GM12878 (cell line): ENCODE measurements at regions of chr6 and their contacts with region 1.

Region 1: DNA sequence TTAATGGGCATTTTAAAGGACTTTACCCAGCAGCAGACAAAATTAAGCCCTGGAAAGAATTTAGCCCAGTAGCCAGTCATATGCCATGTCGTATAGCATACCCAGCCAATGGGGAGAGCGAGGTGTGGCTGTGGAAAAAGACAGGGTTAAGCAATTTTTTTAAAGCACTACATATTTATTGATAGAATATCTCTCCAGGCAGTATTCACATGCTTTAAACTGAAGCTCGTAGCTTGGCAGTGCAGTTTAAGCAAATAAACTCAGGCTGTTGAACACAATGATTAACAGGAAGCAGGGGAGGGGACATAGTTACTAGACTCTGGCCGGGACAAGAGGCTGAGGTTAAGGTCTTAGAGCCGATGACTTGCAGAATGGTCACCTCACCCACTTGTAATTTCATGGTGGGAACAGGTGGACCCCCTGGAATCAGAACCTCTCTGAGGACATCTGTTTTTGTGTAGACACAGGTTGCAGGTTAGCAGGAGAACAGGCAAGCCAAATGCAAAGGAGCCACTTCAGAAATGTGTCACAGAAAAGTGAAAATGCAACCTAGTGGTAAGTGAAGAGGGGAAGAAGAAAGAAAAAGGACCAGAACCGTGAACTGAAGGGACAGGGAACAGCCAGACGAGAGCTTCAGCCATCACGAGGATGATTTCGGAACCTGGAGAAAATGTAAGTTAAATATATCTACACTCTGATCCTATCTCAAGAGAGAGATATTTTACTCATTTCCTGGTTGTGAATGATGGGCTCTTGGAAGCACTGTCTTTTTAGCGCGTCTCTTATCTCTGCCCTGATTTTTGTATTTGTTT is 7.2 kb downstream of the GCNT2 start:
- DNase-seq: peak; percentile 72
- ATAC-seq: peak; percentile 66
- H3K4me3 ChIP-seq: peak overlapping the region; percentile 82
- H3K27ac ChIP-seq: peak overlapping the region; percentile 73
- H3K4me1 ChIP-seq: peaks cover 6% of the 10 kb centered on the region
- H3K27me3 ChIP-seq: no peaks in the 10 kb centered on the region
- CTCF ChIP-seq: 0 out of 6 replicates have a peak, but pooled peaks of 1 of the 3 experiments have one; percentile 8
- EP300 ChIP-seq: peak; percentile 7 to 24; a peak in 2 of 4 replicates
- POLR2A ChIP-seq: peak; percentile 65
- RAD21 ChIP-seq: peak; percentile 12; the same call in 1 of the 2 replicates

Region 2: GRCh38 chr6:10643201-10643651 is 114.8 kb after region 1 on chr6:
- CTCF ChIA-PET with region 1: no interaction called
- POLR2A ChIA-PET with region 1: interaction called, 14 read pairs
- RAD21 ChIA-PET with region 1: no interaction called
- SMC1A ChIA-PET with region 1: interaction called, 4 read pairs
- in situ Hi-C with region 1: no loop called
- intact Hi-C with region 1: no loop called
- DNase-seq: no peak
- ATAC-seq: peak; percentile 87
- H3K4me3 ChIP-seq: no peak overlapping the region
- H3K27ac ChIP-seq: no peak overlapping the region
- H3K4me1 ChIP-seq: no peaks in the 10 kb centered on the region
- H3K27me3 ChIP-seq: no peaks in the 10 kb centered on the region
- CTCF ChIP-seq: no peak
- EP300 ChIP-seq: no peak
- POLR2A ChIP-seq: no peak
- RAD21 ChIP-seq: no peak